Endothelial cell of umbilical vein (primary cell): ENCODE measurements at regions of chr2 and their contacts with region 1.

Region 1: DNA sequence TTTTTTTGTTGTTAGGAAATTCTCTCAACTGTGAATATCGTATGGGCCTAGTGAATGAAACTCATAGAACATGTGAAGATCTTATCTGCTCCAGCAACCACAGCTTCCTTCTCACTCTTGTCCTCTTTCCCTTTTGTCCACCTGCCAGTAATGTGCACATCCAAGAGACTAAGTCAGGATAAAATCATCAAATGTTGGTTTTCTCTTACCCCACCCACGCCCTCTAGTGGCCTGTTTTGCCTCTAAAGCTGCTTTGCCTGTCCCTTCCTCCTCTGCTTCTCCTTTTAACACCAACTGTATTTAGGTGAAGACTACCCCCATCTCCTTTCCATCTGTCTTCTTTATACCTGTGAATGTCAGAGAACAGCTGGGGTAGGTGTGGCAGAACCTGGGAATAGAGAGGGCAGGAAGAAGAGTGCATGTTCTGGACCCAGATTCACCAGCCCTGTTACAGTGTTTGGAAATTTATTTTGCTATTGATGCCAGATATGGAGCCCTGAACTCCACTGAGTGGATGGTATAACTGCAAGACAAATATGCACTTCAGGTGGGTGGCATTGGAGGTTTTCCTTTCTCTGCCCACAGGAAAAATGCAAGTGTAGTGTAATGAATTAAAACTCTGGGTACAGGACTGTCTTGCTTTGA is 8.4 kb upstream of the MGAT5 start:
- DNase-seq: peak; percentile 57
- H3K4me3 ChIP-seq: no peak overlapping the region
- H3K27ac ChIP-seq: no peak overlapping the region
- H3K4me1 ChIP-seq: peaks cover 14% of the 10 kb centered on the region
- H3K27me3 ChIP-seq: no peaks in the 10 kb centered on the region
- CTCF ChIP-seq: peak; percentile 76
- POLR2A ChIP-seq: no peak

Region 2: DNA sequence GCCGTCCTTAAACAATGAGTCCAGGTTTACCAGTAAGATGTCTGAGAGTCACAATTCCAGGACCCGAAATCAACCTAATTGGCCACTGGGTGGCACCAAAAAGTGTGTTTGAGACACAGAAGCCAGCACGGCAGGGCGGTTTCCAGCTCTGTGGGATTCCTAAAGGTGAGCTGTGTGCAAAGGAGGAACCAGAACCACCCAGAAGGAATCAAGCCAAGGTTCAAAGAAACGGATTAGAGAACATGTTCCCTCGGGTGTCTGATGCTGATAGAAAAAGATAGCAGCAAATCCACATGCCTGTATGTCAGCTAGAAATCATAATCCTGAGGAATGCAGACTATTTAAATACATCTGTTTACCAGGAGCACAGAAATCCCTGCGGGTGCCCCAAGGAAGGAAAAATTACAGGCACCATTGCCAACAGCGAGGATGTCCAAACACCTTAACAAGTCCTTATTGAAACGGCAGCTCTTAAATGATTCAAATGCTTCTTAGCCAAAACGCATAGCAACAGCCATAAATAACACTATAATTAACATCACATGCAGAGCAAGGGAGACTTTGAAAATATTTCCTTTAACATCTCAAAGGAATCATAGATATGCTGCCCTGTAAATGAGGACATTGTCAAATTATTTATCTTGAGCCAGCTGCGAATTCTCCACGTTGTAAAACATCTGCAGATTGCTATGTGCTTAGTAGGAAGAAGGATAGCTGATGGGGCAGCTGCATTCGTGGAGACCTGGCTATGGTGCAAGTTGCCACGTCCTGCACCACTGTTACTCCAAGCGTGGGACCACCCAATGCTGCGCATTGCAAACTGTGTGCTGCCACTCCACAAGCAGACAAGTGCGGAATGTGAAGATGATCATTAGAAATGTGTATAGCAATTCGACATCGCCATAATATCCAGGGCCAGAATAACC is 358.5 kb before region 1 on chr2:
- CTCF ChIA-PET with region 1: interaction called, 43 read pairs
- POLR2A ChIA-PET with region 1: no interaction called
- dilution Hi-C with region 1: no loop called
- intact Hi-C with region 1: loop called (anchors 1 kb)
- DNase-seq: peak; percentile 61
- H3K4me3 ChIP-seq: no peak overlapping the region
- H3K27ac ChIP-seq: no peak overlapping the region
- H3K4me1 ChIP-seq: peaks cover 6% of the 10 kb centered on the region
- H3K27me3 ChIP-seq: peaks cover 0 to 26% of the 10 kb centered on the region in 2 experiments
- CTCF ChIP-seq: peak; percentile 60 to 65
- POLR2A ChIP-seq: no peak

Region 3: DNA sequence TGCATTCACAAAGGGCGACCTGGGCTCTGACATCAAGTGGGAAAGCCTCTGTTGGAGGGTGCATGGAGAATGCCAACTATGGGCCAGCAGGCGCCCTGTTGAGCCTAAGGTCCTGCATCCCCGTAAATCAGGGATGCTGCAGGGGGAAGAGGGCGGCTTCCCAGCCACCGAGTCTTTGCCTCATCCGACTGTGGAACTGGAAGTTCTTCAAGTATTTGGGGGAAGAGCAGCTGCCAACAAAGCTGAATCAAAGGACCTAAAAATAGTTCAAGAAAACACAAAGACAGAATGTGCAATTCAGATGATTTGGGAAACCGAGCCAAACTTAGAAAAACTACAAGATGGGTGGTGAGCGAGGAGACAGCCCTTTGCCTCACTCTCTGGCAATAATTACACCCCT is 272.7 kb before region 1 on chr2:
- CTCF ChIA-PET with region 1: no interaction called
- POLR2A ChIA-PET with region 1: no interaction called
- dilution Hi-C with region 1: no loop called
- intact Hi-C with region 1: no loop called
- DNase-seq: no peak
- H3K4me3 ChIP-seq: no peak overlapping the region
- H3K27ac ChIP-seq: no peak overlapping the region
- H3K4me1 ChIP-seq: no peaks in the 10 kb centered on the region
- H3K27me3 ChIP-seq: peaks cover 0 to 2% of the 10 kb centered on the region in 2 experiments
- CTCF ChIP-seq: no peak
- POLR2A ChIP-seq: no peak

Region 4: DNA sequence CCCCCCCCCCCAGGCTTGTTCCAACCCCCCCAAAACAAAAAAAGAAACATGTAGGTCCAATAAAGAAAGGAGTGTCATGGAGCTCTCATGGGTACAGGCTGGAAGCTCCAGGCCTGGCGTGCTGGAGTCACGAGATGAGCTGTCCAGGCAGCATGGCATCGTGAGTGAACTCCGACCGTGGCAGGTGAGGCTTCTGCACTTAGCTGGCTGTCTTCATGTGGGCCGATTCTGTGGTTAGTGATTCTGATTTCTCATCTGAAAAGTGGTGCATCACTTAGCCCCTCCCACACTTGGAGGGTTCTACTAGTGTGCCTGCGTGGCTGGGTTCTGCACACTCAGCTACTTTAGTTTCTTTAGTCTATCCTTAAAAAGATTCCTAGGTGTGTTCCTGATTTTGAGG is 118.0 kb before region 1 on chr2:
- CTCF ChIA-PET with region 1: no interaction called
- POLR2A ChIA-PET with region 1: no interaction called
- dilution Hi-C with region 1: no loop called
- intact Hi-C with region 1: no loop called
- DNase-seq: no peak
- H3K4me3 ChIP-seq: no peak overlapping the region
- H3K27ac ChIP-seq: no peak overlapping the region
- H3K4me1 ChIP-seq: peaks cover 10% of the 10 kb centered on the region
- H3K27me3 ChIP-seq: no peaks in the 10 kb centered on the region
- CTCF ChIP-seq: no peak
- POLR2A ChIP-seq: no peak

Region 5: DNA sequence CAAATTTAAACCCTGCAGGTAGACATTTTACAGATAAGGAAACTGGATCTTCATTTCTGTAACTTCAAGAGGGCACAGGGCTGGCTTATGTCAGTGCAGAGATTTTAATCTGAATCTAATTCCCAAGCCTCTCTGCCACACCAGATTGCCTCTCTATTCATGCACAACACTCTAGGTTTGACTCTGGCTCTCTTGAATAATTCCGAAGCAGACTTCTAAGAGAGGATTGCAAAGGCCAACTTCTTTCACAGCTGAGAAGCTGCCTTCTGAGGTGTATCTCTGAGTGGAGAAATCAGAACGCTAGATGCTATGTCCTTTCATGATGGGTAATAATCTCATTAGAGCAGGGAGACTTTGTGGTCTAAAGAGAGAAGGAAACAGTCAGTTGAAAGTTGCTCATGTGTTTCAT is 11.7 kb before region 1 on chr2:
- CTCF ChIA-PET with region 1: interaction called, 10 read pairs
- POLR2A ChIA-PET with region 1: no interaction called
- dilution Hi-C with region 1: no loop called
- intact Hi-C with region 1: no loop called
- DNase-seq: no peak
- H3K4me3 ChIP-seq: no peak overlapping the region
- H3K27ac ChIP-seq: no peak overlapping the region
- H3K4me1 ChIP-seq: no peaks in the 10 kb centered on the region
- H3K27me3 ChIP-seq: no peaks in the 10 kb centered on the region
- CTCF ChIP-seq: no peak
- POLR2A ChIP-seq: no peak

Region 6: DNA sequence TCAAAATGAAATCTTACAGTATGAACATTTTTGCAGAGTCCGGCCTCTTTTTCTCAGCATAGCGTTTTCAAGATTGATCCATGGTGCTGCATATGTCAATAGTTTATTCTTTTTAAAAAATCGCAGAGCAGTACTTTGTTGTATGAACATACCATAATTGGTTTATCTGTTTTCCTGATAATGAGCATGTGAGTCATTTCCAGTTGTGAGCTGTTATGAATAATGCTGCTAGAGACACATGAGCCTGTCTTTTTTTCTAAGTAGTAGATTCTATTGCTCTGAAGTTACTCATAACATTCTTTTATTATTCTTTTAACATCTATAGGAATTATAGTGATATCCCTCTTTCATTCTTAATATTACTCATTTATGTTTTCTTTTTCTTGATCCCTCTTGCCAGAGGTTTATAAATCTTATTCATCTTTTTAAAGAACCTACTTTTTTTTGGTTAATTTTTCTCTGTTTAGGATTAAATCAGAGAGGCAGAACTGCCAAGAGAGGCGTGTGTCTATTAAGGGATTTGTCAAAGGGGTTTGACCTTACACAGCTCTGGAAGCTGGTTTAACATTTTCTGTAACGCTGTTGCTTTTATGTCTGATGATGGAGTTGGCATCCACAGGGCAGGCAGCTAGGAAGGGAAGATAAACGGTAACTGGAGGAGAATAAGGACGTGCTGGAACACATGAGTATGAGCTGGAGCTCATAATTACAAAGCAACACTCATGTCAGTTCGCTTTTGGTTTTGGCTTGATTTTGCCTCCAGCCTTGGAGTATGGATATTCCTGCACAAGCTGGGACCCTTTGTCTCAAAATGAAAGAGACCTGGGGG is 55.9 kb after region 1 on chr2:
- CTCF ChIA-PET with region 1: interaction called, 10 read pairs
- POLR2A ChIA-PET with region 1: no interaction called
- dilution Hi-C with region 1: no loop called
- intact Hi-C with region 1: loop called (anchors 2 kb)
- DNase-seq: peak; percentile 81
- H3K4me3 ChIP-seq: peak overlapping the region in 1 of 3 experiments; percentile 16
- H3K27ac ChIP-seq: peak overlapping the region; percentile 78
- H3K4me1 ChIP-seq: peaks cover 47% of the 10 kb centered on the region
- H3K27me3 ChIP-seq: no peaks in the 10 kb centered on the region
- CTCF ChIP-seq: no peak
- POLR2A ChIP-seq: no peak

Region 7: GRCh38 chr2:134359367-134360081 is 114.1 kb after region 1 on chr2:
- CTCF ChIA-PET with region 1: interaction called, 4 read pairs
- POLR2A ChIA-PET with region 1: no interaction called
- dilution Hi-C with region 1: no loop called
- intact Hi-C with region 1: loop called (anchors 5 kb)
- DNase-seq: peak; percentile 73
- H3K4me3 ChIP-seq: no peak overlapping the region
- H3K27ac ChIP-seq: peak overlapping the region; percentile 49
- H3K4me1 ChIP-seq: peaks cover 18% of the 10 kb centered on the region
- H3K27me3 ChIP-seq: no peaks in the 10 kb centered on the region
- CTCF ChIP-seq: no peak
- POLR2A ChIP-seq: no peak

Region 8: DNA sequence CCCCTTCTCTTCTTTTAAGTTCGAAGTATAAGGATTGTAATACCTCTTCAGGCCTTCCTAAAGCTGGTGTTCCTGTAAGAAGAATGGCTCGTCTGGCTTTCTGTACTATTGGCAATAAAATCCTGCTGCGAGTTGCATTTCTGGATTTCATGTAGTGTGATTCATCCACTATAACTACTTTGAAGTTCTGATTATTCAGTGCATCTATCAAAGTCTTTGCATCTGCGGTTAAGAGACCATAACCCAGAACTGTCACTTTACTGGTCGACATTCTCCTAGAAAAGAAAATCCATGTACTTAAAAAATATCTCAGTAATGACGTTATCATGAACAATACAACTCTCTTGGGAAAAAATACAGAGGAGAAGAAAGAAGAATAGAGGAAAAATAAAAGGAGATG is 1104.5 kb after region 1 on chr2:
- CTCF ChIA-PET with region 1: no interaction called
- POLR2A ChIA-PET with region 1: no interaction called
- dilution Hi-C with region 1: no loop called
- intact Hi-C with region 1: no loop called
- DNase-seq: no peak
- H3K4me3 ChIP-seq: no peak overlapping the region
- H3K27ac ChIP-seq: no peak overlapping the region
- H3K4me1 ChIP-seq: no peaks in the 10 kb centered on the region
- H3K27me3 ChIP-seq: no peaks in the 10 kb centered on the region
- CTCF ChIP-seq: no peak
- POLR2A ChIP-seq: no peak